ENCODE measurements at regions of chr5 and their contacts with region 1.

Region 1: DNA sequence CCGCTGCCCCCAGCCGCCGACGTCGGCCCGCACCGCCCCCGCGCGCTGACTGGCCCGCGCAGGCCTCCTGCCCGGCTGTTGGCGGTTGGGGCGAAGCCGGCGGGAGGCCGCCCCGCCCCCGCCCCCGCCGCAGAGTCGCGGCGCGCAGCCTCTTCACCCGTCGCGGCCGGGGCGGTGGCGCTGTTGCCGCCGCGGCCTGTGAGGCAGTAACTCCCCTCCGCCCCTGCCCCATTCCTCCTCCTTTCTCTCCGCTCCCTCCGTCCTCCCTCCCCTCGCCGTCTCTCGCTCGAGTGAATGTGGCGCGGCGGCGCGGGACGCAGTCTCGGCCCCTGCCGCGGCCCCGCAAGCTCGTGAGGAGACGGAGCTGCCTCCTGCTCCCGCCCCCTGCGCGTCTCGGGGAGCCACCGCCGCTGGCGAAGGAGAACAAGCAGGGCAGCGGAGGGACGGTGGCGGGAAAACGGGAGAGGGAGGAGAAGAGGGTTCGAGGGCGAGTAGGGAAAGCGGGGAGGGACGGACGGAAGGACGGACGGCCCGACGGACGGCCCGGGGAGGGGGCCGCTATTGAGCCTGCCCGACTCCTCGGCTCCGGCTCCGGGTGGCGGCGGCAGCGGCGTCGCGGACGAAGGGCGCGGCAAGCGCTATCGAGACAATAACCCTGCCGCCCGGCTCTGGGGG is 637 bp upstream of the ERBIN start:
- DNase-seq: peak; percentile 84
- ATAC-seq: peak; percentile 65
- H3K4me3 Mint-ChIP-seq: peak overlapping the region; percentile 85
- H3K27ac Mint-ChIP-seq: peak overlapping the region; percentile 87
- H3K4me1 Mint-ChIP-seq: peaks cover 28% of the 10 kb centered on the region
- H3K27me3 Mint-ChIP-seq: no peaks in the 10 kb centered on the region

Region 2: GRCh38 chr5:65562731-65563701 is 362.7 kb before region 1 on chr5 and contains the starts of genes CENPK and PPWD1:
- CTCF ChIA-PET with region 1: no interaction called
- POLR2A ChIA-PET with region 1: no interaction called
- intact Hi-C with region 1: loop called (anchors 2 to 5 kb)
- DNase-seq: peak; percentile 98
- ATAC-seq: peak; percentile 99
- H3K4me3 Mint-ChIP-seq: peak within 1 kb of the TSS; percentile 91
- H3K27ac Mint-ChIP-seq: peak within 1 kb of the TSS; percentile 98
- H3K4me1 Mint-ChIP-seq: peaks cover 47% of the 10 kb centered on the region
- H3K27me3 Mint-ChIP-seq: no peaks in the 10 kb centered on the region
- total RNA-seq, gene CENPK: 70.5 to 77.5 TPM
- total RNA-seq, gene PPWD1: 43.0 to 44.0 TPM

Region 3: DNA sequence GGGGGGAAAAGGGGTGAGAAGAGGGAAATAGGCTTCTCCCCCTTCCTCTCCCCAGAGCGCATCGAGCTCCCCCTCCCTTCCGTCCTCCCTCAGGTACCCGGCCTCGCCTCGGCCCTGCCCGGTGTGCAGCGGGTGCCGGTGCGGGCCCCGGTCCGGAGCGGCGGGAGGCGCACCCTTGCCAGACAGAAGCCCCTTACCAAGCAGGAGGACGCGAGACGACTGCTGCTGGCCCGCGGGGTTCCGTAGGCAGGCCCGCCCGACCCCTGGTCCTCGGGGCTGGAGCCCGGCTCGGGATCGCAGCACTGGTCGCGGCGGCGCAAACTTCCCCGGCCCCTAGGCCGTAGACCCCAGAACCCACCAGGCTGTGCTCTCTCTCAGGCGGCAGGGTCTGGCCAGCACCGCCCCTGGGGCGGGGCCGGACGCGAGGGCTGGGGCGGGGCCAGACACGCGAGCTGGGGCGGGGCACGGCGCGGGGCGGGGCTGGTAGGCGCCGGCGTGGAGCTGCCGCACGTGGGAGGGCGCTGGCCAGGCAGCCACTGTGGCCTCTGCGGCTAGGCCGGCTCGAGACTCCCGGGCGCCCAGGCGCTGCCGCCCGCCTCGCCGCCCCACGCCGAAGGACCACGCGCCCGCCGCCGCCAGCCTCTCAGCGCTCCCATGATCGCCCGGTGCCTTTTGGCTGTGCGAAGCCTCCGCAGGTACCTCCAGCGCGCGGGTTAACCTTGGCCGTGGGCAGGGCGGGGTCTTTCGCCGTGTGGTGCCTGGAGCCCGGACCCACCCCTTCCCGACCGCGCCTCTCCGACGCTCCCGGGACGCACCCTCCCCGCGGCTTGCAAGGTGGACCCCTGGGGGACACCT is 203.8 kb before region 1 on chr5 and contains the starts of genes NLN and SGTB:
- CTCF ChIA-PET with region 1: no interaction called
- POLR2A ChIA-PET with region 1: interaction called, 7 read pairs
- intact Hi-C with region 1: loop called in 1 of 2 experiments (anchors 1 kb)
- DNase-seq: peak; percentile 91
- ATAC-seq: peak; percentile 91
- H3K4me3 Mint-ChIP-seq: peak within 1 kb of the TSS; percentile 94
- H3K27ac Mint-ChIP-seq: peak within 1 kb of the TSS; percentile 93
- H3K4me1 Mint-ChIP-seq: peaks cover 20% of the 10 kb centered on the region
- H3K27me3 Mint-ChIP-seq: no peaks in the 10 kb centered on the region
- total RNA-seq, gene NLN: 30.9 to 33.8 TPM
- total RNA-seq, gene SGTB: 18.0 TPM

Region 4: GRCh38 chr5:65809817-65810531 is 115.8 kb before region 1 on chr5:
- CTCF ChIA-PET with region 1: no interaction called
- POLR2A ChIA-PET with region 1: no interaction called
- intact Hi-C with region 1: loop called in 1 of 2 experiments (anchors 10 kb)
- DNase-seq: no peak
- ATAC-seq: no peak
- H3K4me3 Mint-ChIP-seq: no peak overlapping the region
- H3K27ac Mint-ChIP-seq: no peak overlapping the region
- H3K4me1 Mint-ChIP-seq: peaks cover 22% of the 10 kb centered on the region
- H3K27me3 Mint-ChIP-seq: peaks cover 2% of the 10 kb centered on the region

Region 5: DNA sequence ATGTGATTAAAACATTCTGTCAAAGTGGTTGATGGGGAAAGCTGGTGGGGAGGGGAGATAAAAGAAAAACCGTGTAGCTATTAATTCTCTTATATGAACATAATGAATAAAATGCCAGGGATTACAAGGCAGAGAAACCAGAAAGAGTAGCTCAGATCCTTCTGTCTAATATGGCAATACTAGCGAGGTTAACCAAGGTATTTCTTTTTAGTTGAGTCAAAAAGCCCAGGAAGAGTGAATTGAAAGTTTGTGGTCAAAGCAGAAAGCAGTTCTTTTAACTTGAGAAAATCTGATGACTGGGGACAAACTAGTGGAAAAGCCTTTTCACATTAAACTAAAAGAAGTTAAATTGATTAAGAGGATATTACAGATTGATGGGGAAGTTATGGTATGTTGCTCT is 76.7 kb after region 1 on chr5:
- CTCF ChIA-PET with region 1: interaction called, 4 read pairs
- POLR2A ChIA-PET with region 1: no interaction called
- intact Hi-C with region 1: loop called (anchors 2 to 5 kb)
- DNase-seq: no peak
- ATAC-seq: peak; percentile 96
- H3K4me3 Mint-ChIP-seq: no peak overlapping the region
- H3K27ac Mint-ChIP-seq: peak overlapping the region; percentile 4
- H3K4me1 Mint-ChIP-seq: peaks cover 41% of the 10 kb centered on the region
- H3K27me3 Mint-ChIP-seq: no peaks in the 10 kb centered on the region

Region 6: GRCh38 chr5:66144074-66144833 is 218.5 kb after region 1 on chr5 and contains the start of gene SREK1:
- CTCF ChIA-PET with region 1: interaction called, 4 read pairs
- POLR2A ChIA-PET with region 1: interaction called, 4 read pairs
- intact Hi-C with region 1: loop called (anchors 1 kb)
- DNase-seq: peak; percentile 95
- ATAC-seq: peak; percentile 90
- H3K4me3 Mint-ChIP-seq: peak within 1 kb of the TSS; percentile 96
- H3K27ac Mint-ChIP-seq: peak within 1 kb of the TSS; percentile 99
- H3K4me1 Mint-ChIP-seq: peaks cover 39% of the 10 kb centered on the region
- H3K27me3 Mint-ChIP-seq: no peaks in the 10 kb centered on the region
- total RNA-seq, gene SREK1: 56.1 to 61.3 TPM

Measured in activated CD4-positive, alpha-beta T cell treated with anti-CD3 and anti-CD28 coated beads for 36 hours (primary cell).